ENCODE measurements at regions of chr16 and their contacts with region 1.

Region 1: DNA sequence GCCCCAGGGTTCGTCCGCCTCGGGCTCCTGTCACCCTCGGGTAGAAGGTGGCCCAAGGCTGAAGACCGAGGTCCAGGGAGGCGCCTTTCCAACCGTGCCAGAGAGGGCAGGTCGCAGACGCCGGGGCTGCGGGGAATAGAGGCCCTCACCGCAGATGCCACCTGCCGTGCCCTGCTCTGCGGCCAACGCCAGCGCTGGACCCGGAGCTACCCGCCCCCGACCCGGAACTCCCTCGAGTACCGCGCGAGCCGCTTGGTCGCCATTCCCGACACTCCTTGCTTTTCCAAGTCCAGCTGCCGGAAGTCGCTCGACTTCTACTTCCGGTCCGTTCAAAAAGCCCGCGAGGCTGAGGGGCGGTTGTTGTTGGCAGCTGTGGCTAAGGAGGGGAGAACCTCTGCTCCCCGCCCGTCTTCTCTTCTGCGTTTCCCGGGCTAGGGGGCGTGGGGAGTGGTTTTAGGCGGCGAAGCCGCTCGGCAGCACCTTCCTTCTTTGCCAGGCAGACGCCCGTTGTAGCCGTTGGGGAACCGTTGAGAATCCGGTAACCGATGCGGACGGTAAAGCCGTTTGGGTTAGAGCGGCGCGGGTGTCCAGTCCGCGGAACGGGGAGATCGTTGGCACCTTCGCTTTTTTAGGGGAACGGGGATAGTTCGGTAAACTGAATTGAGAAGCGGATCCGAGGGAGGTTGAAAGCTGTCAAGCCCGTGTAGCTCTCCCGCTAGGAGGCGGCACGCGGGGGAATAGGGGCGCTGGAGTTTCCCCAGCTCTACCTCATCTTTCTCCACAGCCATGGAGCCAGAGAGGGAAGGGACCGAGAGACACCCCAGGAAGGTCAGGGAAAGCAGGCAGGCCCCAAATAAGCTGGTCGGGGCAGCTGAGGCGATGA is at the starts of genes ERI2 and REXO5:
- DNase-seq: peak; percentile 81
- ATAC-seq: peak; percentile 87
- H3K4me3 Mint-ChIP-seq: peak within 1 kb of the TSS; percentile 99
- H3K27ac Mint-ChIP-seq: peak within 1 kb of the TSS; percentile 98
- H3K4me1 Mint-ChIP-seq: peaks cover 13% of the 10 kb centered on the region
- H3K27me3 Mint-ChIP-seq: no peaks in the 10 kb centered on the region
- CTCF ChIP-seq: no peak
- total RNA-seq, gene ERI2: 16.1 to 17.7 TPM
- total RNA-seq, gene REXO5: 16.4 to 20.4 TPM

Region 2: GRCh38 chr16:20624882-20625807 is 181.3 kb before region 1 on chr16:
- CTCF ChIA-PET with region 1: no interaction called
- POLR2A ChIA-PET with region 1: no interaction called
- intact Hi-C with region 1: no loop called
- DNase-seq: no peak
- ATAC-seq: no peak
- H3K4me3 Mint-ChIP-seq: no peak overlapping the region
- H3K27ac Mint-ChIP-seq: no peak overlapping the region
- H3K4me1 Mint-ChIP-seq: peaks cover 2% of the 10 kb centered on the region
- H3K27me3 Mint-ChIP-seq: no peaks in the 10 kb centered on the region
- CTCF ChIP-seq: no peak

Region 3: GRCh38 chr16:20763461-20764232 is 42.8 kb before region 1 on chr16 and contains the start of gene ACSM3:
- CTCF ChIA-PET with region 1: interaction called, 3 read pairs
- POLR2A ChIA-PET with region 1: interaction called, 13 read pairs
- intact Hi-C with region 1: no loop called
- DNase-seq: peak; percentile 76
- ATAC-seq: peak; percentile 99
- H3K4me3 Mint-ChIP-seq: peak within 1 kb of the TSS; percentile 78
- H3K27ac Mint-ChIP-seq: peak within 1 kb of the TSS; percentile 90
- H3K4me1 Mint-ChIP-seq: peaks cover 23% of the 10 kb centered on the region
- H3K27me3 Mint-ChIP-seq: no peaks in the 10 kb centered on the region
- CTCF ChIP-seq: no peak
- total RNA-seq, gene ACSM3: 16.1 to 16.6 TPM